ENCODE measurements at regions of chr7 and their contacts with region 1.

Region 1: GRCh38 chr7:75534727-75535307 is 42.7 kb downstream of the SPDYE5 start:
- DNase-seq: no peak
- H3K4me3 ChIP-seq: no peak overlapping the region
- H3K27ac ChIP-seq: no peak overlapping the region
- H3K4me1 ChIP-seq: no peaks in the 10 kb centered on the region
- H3K27me3 ChIP-seq: no peaks in the 10 kb centered on the region
- CTCF ChIP-seq: no peak
- EP300 ChIP-seq: no peak
- POLR2A ChIP-seq: no peak

Region 2: DNA sequence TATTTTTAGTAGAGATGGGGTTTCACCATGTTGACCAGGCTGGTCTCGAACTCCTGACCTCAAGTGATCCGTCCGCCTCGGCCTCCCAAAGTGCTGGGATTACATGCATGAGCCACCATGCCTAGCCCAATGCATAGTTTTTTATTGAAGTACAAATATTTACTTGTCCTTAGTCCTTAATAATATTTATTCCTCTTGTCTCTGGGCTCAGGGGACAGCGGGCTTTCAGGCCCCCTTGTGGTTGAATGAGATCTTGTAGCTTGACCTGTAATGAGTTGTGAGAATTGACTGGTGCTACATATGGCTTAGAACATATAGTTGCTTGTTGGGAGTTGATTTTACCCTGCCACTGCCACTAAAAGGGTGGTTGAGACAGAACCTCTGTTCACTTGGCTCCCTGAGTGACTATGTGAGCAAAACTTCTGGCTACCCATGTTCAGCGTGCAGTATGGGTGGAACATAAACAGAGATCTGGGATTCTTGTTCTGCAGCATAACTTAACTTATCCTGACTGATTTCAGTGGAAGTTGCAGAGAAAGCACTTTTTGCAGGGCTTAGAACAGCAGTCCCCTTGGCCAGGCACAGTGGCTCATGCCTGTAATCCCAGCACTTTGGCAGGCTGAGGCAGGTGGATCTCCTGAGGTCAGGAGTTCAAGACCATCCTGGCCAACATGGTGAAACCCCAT is 222.3 kb after region 1 on chr7:
- in situ Hi-C with region 1: loop called in 3 of 4 experiments (anchors 10 to 25 kb)
- intact Hi-C with region 1: no loop called
- DNase-seq: no peak
- H3K4me3 ChIP-seq: no peak overlapping the region
- H3K27ac ChIP-seq: no peak overlapping the region
- H3K4me1 ChIP-seq: no peaks in the 10 kb centered on the region
- H3K27me3 ChIP-seq: no peaks in the 10 kb centered on the region
- CTCF ChIP-seq: peak in 4 of 5 experiments; percentile 35 to 54 (median 39)
- EP300 ChIP-seq: no peak
- POLR2A ChIP-seq: no peak

Region 3: GRCh38 chr7:75835688-75836285 is 301.0 kb after region 1 on chr7:
- in situ Hi-C with region 1: no loop called
- intact Hi-C with region 1: no loop called
- DNase-seq: no peak
- H3K4me3 ChIP-seq: no peak overlapping the region
- H3K27ac ChIP-seq: no peak overlapping the region
- H3K4me1 ChIP-seq: no peaks in the 10 kb centered on the region
- H3K27me3 ChIP-seq: no peaks in the 10 kb centered on the region
- CTCF ChIP-seq: no peak
- EP300 ChIP-seq: no peak
- POLR2A ChIP-seq: no peak

Measured in transverse colon (tissue), 4 donors.